OCI-LY7 (cell line): ENCODE measurements at regions of chr15 and their contacts with region 1.

Region 1: GRCh38 chr15:26166429-26166828 is 303.3 kb upstream of the ATP10A start:
- DNase-seq: no peak
- H3K4me3 ChIP-seq: no peak overlapping the region
- H3K27ac ChIP-seq: no peak overlapping the region
- H3K4me1 ChIP-seq: no peaks in the 10 kb centered on the region
- CTCF ChIP-seq: no peak

Region 2: GRCh38 chr15:26095710-26096330 is 70.6 kb before region 1 on chr15:
- CTCF ChIA-PET with region 1: no interaction called
- POLR2A ChIA-PET with region 1: interaction called, 11 read pairs
- intact Hi-C with region 1: no loop called
- DNase-seq: no peak
- H3K4me3 ChIP-seq: no peak overlapping the region
- H3K27ac ChIP-seq: no peak overlapping the region
- H3K4me1 ChIP-seq: no peaks in the 10 kb centered on the region
- CTCF ChIP-seq: no peak

Region 3: DNA sequence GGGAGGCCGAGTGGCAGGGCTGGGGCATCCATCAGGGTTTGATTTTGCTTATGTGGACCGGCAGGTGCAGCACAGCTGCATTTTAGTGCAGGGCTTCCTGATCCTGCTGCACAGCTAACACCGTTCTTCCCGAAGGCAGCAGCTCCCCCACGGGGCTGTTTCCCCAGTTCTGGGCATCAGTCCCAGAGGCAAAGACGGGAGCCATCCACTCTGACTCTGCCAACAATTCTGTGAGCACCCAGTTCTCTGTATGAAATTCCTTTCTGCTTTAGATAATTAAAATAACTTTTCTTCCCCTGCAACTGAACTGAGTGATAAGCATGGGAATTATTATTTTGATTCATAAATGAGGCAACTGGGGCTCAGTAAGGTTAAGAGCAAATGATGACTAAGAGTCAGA is 40.4 kb before region 1 on chr15:
- CTCF ChIA-PET with region 1: no interaction called
- POLR2A ChIA-PET with region 1: no interaction called
- intact Hi-C with region 1: no loop called
- DNase-seq: no peak
- H3K4me3 ChIP-seq: no peak overlapping the region
- H3K27ac ChIP-seq: no peak overlapping the region
- H3K4me1 ChIP-seq: no peaks in the 10 kb centered on the region
- CTCF ChIP-seq: no peak